ENCODE measurements at regions of chr17 and their contacts with region 1.

Region 1: DNA sequence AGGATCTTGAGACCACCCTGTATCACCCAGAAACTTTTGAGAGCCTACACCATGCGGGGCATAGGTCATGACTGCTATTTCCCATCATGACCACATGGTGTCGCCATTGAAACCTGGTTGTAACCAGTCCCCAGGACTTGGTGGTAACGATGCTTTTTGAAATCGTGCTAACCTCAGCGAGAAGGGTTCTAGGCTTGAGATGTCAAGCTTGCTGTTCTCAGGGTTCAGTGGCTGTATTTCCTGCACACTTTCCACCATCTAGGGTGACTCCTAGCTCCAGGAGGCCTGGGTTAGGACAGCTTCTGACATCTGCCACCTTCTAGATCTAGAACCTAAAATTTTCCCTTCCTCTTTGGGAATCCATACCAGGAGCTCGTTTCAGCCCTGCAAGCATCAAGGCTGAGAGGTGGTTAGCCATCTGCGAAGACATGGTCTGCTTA is 13.0 kb upstream of the SPNS3 start:
- DNase-seq: peak; percentile 74
- ATAC-seq: peak; percentile 97
- H3K4me3 Mint-ChIP-seq: no peak overlapping the region
- H3K27ac Mint-ChIP-seq: no peak overlapping the region
- H3K4me1 Mint-ChIP-seq: no peaks in the 10 kb centered on the region
- H3K27me3 Mint-ChIP-seq: no peaks in the 10 kb centered on the region

Region 2: DNA sequence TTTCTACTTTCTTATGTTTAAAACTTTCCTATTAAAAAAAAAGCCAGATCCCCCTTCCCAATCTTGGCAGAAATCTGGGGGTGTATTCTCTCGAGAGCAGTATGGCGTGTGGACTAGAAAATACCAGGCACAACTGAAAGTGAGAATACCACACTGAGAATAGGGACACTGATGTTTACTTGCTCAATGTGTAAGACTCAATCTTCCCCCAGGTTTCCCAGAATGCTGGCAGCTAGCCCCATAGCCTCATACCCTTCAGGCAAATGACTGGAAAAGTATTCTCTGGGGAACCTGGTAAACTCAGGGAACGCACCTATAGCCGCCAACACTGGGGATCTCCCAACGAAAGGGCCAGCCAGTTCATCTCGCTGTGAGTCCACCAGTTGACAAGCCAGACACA is 293.2 kb before region 1 on chr17:
- CTCF ChIA-PET with region 1: no interaction called
- POLR2A ChIA-PET with region 1: no interaction called
- intact Hi-C with region 1: no loop called
- DNase-seq: no peak
- ATAC-seq: no peak
- H3K4me3 Mint-ChIP-seq: no peak overlapping the region
- H3K27ac Mint-ChIP-seq: peak overlapping the region; percentile 73
- H3K4me1 Mint-ChIP-seq: peaks cover 38% of the 10 kb centered on the region
- H3K27me3 Mint-ChIP-seq: no peaks in the 10 kb centered on the region

Region 3: DNA sequence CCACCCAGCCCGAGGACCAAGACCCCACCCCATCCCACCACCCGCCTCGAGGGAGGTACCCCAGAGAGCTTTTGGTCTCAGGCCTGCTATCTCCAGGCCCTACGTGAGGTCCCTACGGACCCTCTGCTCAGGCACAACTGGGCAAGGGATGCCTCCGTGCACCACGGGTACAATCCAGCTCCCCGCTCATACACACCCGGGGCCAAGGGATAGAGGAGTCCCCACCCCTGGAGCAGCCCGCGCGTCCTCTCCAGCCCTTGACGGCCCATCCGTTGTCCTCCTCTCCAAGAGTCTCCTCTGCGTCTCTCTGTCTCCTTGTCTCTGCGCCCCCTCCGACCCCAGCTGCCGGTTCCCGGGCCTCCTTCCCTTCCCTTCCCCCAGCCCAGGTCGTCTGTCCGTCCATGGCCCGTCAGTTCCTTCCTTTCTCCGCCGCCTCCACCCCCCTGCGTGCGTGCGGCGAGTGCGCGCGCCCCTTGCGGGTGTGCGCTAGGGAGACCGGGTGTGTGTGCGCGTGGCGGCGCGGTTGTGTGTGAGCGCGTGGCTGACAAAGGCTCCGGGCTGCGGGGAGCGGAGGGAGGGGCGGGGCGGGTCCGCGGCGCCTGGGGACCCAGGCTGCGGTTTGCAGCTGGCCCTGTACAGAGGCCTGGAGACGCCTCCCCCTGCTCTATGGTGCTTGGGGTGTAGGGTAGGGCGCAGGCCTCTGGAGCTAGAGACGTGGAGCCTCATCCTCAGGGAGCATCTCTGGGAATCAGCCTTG is 78.9 kb after region 1 on chr17:
- CTCF ChIA-PET with region 1: interaction called, 3 read pairs
- POLR2A ChIA-PET with region 1: no interaction called
- intact Hi-C with region 1: loop called (anchors 1 to 5 kb)
- DNase-seq: peak; percentile 44
- ATAC-seq: peak; percentile 10
- H3K4me3 Mint-ChIP-seq: peak overlapping the region; percentile 65
- H3K27ac Mint-ChIP-seq: no peak overlapping the region
- H3K4me1 Mint-ChIP-seq: peaks cover 20% of the 10 kb centered on the region
- H3K27me3 Mint-ChIP-seq: peaks cover 32% of the 10 kb centered on the region

Region 4: GRCh38 chr17:4534026-4534914 is 113.6 kb after region 1 on chr17:
- CTCF ChIA-PET with region 1: no interaction called
- POLR2A ChIA-PET with region 1: no interaction called
- intact Hi-C with region 1: loop called in 1 of 2 experiments (anchors 10 kb)
- DNase-seq: no peak
- ATAC-seq: peak; percentile 13
- H3K4me3 Mint-ChIP-seq: no peak overlapping the region
- H3K27ac Mint-ChIP-seq: no peak overlapping the region
- H3K4me1 Mint-ChIP-seq: no peaks in the 10 kb centered on the region
- H3K27me3 Mint-ChIP-seq: peaks cover 6% of the 10 kb centered on the region

Region 5: GRCh38 chr17:4625181-4625617 is 204.5 kb after region 1 on chr17:
- CTCF ChIA-PET with region 1: interaction called, 9 read pairs
- POLR2A ChIA-PET with region 1: no interaction called
- intact Hi-C with region 1: loop called (anchors 1 kb)
- DNase-seq: no peak
- ATAC-seq: no peak
- H3K4me3 Mint-ChIP-seq: no peak overlapping the region
- H3K27ac Mint-ChIP-seq: no peak overlapping the region
- H3K4me1 Mint-ChIP-seq: no peaks in the 10 kb centered on the region
- H3K27me3 Mint-ChIP-seq: peaks cover 13% of the 10 kb centered on the region

Region 6: GRCh38 chr17:4891411-4892342 is 471.0 kb after region 1 on chr17:
- CTCF ChIA-PET with region 1: no interaction called
- POLR2A ChIA-PET with region 1: no interaction called
- intact Hi-C with region 1: loop called in 1 of 2 experiments (anchors 1 kb)
- DNase-seq: no peak
- ATAC-seq: no peak
- H3K4me3 Mint-ChIP-seq: no peak overlapping the region
- H3K27ac Mint-ChIP-seq: no peak overlapping the region
- H3K4me1 Mint-ChIP-seq: no peaks in the 10 kb centered on the region
- H3K27me3 Mint-ChIP-seq: no peaks in the 10 kb centered on the region